ENCODE measurements at regions of chr11 and their contacts with region 1.

Region 1: DNA sequence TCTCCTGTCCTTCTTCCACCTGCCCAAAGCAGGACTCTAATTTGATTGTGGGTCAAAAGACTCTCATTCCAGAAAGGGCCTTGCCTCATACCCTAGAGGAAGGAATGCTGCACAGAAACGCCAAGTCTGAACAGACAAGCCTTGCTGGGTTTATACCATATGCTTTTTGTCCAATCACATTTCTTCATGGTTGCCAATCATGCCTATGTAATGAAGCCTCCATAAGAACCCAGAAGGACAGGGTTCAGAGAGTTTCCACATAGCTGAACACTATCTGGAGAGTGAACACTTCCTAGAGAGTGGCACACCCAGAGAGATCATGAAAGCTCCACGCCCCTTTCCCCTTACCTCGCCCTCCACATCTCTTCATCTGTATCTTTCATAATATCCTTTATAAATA is 4.8 kb upstream of the SAA2 start:
- DNase-seq: no peak
- ATAC-seq: no peak
- H3K4me3 ChIP-seq: no peak overlapping the region
- H3K27ac ChIP-seq: no peak overlapping the region
- H3K4me1 ChIP-seq: no peaks in the 10 kb centered on the region
- H3K27me3 ChIP-seq: peaks cover 0 to 13% (median 0%) of the 10 kb centered on the region in 7 donors
- CTCF ChIP-seq: no peak

Region 2: GRCh38 chr11:18056561-18057181 is 196.6 kb before region 1 on chr11:
- intact Hi-C with region 1: no loop called
- DNase-seq: no peak
- ATAC-seq: no peak
- H3K4me3 ChIP-seq: no peak overlapping the region
- H3K27ac ChIP-seq: no peak overlapping the region
- H3K4me1 ChIP-seq: no peaks in the 10 kb centered on the region
- H3K27me3 ChIP-seq: peaks cover 0 to 3% (median 0%) of the 10 kb centered on the region in 7 donors
- CTCF ChIP-seq: no peak

Region 3: DNA sequence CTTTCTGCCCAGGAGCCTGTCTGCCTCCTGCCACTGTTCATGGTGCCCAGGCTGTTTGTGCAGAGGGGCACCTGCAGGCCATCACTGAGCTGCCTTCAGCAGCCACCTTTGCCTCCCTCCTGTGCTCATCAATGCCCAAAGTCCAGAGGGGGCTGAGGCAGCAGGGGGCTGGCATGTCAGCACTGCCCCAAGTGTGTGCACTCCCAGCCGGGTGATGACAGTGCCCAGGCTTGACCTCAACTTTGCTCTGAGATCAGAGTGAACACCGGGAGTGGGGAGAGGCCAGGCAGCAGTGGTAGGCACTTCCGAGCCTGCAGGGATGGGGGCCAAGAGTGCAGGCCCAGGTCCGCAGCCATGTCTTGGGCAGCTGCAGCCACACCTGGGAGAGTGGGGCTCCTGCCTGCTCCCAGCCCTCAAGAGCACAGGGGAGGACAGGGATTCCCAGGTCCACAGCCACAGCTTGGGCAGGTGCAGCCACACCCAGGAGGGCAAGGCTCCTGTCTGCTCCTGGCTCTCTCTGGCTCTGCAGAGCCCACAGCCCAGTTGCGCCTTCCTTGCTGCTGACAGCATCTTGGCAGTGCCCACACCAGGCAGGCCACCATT is 31.9 kb before region 1 on chr11:
- intact Hi-C with region 1: loop called in 1 of 10 experiments (anchors 1 kb)
- DNase-seq: no peak
- ATAC-seq: peak in 1 of 8 donors; percentile 22
- H3K4me3 ChIP-seq: no peak overlapping the region
- H3K27ac ChIP-seq: no peak overlapping the region
- H3K4me1 ChIP-seq: no peaks in the 10 kb centered on the region
- H3K27me3 ChIP-seq: peaks cover 0 to 7% (median 0%) of the 10 kb centered on the region in 7 donors
- CTCF ChIP-seq: no peak

Measured in heart right ventricle (tissue), 16 donors.